Activated naive CD4-positive, alpha-beta T cell treated with anti-CD3 and anti-CD28 coated beads for 36 hours (primary cell): ENCODE measurements at regions of chr2 and their contacts with region 1.

Region 1: GRCh38 chr2:11129598-11130449 is 25.4 kb upstream of the SLC66A3 start:
- DNase-seq: peak; percentile 89
- H3K4me3 Mint-ChIP-seq: peak overlapping the region; percentile 57
- H3K27ac Mint-ChIP-seq: peak overlapping the region; percentile 71
- H3K4me1 Mint-ChIP-seq: peaks cover 21% of the 10 kb centered on the region
- H3K27me3 Mint-ChIP-seq: no peaks in the 10 kb centered on the region

Region 2: GRCh38 chr2:11142345-11142744 is 12.5 kb after region 1 on chr2:
- CTCF ChIA-PET with region 1: interaction called, 27 read pairs
- intact Hi-C with region 1: no loop called
- DNase-seq: no peak
- H3K4me3 Mint-ChIP-seq: no peak overlapping the region
- H3K27ac Mint-ChIP-seq: no peak overlapping the region
- H3K4me1 Mint-ChIP-seq: no peaks in the 10 kb centered on the region
- H3K27me3 Mint-ChIP-seq: no peaks in the 10 kb centered on the region

Region 3: GRCh38 chr2:11200651-11201050 is 70.8 kb after region 1 on chr2:
- CTCF ChIA-PET with region 1: interaction called, 16 read pairs
- intact Hi-C with region 1: no loop called
- DNase-seq: no peak
- H3K4me3 Mint-ChIP-seq: no peak overlapping the region
- H3K27ac Mint-ChIP-seq: no peak overlapping the region
- H3K4me1 Mint-ChIP-seq: peaks cover 9% of the 10 kb centered on the region
- H3K27me3 Mint-ChIP-seq: no peaks in the 10 kb centered on the region

Region 4: DNA sequence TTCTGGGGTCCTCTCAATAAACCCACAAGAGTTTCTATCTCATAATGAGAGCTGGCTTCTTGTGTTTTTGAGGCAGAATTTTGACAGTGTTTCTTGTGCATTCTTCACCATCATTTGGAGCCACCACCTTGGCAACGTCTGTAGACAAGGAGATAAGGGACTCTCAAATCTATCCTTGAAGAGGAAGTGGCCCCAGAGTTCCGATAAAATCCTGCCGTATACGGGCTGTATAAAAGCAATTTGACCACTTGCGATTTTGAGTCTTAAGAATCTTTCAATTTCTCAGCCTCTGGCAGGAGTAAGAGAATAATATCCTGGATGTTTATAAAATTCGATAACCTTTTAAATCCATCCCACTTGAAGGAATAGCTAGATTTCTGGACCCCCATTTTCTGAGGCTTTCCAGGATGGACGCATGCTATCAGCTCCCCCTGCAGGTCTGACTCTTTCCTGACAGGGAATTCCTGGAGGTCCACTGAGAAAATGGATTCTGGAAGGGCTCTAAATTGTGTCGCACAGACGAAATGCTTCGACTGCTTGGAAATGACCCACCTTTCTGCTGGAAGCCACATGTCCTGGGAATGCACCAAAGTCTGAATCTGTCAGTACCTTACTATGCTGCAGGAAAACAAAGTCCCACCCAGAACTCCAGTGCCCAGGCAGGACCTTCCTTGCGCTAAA is 282.1 kb after region 1 on chr2:
- CTCF ChIA-PET with region 1: interaction called, 8 read pairs
- intact Hi-C with region 1: loop called (anchors 1 kb)
- DNase-seq: peak; percentile 30
- H3K4me3 Mint-ChIP-seq: no peak overlapping the region
- H3K27ac Mint-ChIP-seq: no peak overlapping the region
- H3K4me1 Mint-ChIP-seq: no peaks in the 10 kb centered on the region
- H3K27me3 Mint-ChIP-seq: peaks cover 10% of the 10 kb centered on the region

Region 5: DNA sequence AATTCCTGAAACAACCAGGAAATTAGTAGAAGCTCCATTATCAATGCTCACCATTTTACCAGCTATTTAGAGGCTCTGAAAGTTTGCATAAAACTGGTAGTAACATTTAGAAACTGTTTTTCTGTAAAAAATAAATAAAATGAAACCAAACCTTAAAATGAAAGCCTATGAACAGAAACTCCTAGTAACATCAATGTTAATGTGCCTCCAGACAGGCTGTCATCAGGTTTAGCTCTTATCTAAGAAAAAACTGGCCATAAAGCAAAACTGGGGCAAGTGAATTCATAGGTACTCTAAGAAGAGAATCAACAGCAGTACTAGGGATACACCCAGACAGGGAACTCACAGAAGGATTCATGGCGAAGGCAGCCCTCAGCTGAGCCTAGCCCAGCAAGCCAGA is 328.1 kb after region 1 on chr2:
- CTCF ChIA-PET with region 1: interaction called, 19 read pairs
- intact Hi-C with region 1: no loop called
- DNase-seq: no peak
- H3K4me3 Mint-ChIP-seq: no peak overlapping the region
- H3K27ac Mint-ChIP-seq: no peak overlapping the region
- H3K4me1 Mint-ChIP-seq: peaks cover 41% of the 10 kb centered on the region
- H3K27me3 Mint-ChIP-seq: no peaks in the 10 kb centered on the region

Region 6: DNA sequence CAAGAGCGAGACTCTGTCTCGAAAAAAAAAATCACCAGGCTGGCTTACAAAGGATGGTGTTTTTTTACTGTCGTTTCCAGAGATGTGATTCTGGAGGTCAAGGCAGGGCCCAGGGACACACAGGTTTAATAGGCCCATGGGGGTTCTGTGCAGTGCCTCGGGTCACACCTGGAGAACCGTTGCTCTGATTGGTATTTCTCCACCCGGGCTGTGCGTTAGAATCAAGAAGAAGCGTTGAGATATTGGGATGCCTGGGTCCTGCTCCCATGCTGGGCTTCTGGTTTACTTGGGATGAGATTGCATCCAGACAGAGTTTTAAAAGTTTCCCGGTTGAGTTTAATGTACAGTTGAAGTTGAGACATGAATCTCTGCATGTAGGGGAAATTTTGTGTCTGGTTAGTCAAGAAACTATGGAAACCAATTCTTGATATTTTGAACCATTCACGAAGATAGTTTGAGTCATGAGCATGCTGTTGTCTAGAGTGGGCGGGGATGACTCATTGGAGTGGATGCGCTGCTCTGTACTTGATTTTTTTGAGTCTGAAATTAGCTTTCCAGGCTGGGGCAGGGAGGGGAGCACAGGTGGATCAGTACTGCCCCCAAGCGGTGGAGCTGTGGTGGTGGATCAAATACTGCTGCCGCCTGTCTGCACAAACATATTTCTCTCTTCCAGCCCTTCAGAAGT is 454.2 kb after region 1 on chr2:
- CTCF ChIA-PET with region 1: interaction called, 93 read pairs
- intact Hi-C with region 1: loop called (anchors 1 kb)
- DNase-seq: peak; percentile 96
- H3K4me3 Mint-ChIP-seq: no peak overlapping the region
- H3K27ac Mint-ChIP-seq: peak overlapping the region; percentile 6
- H3K4me1 Mint-ChIP-seq: peaks cover 19% of the 10 kb centered on the region
- H3K27me3 Mint-ChIP-seq: peaks cover 6% of the 10 kb centered on the region

Region 7: DNA sequence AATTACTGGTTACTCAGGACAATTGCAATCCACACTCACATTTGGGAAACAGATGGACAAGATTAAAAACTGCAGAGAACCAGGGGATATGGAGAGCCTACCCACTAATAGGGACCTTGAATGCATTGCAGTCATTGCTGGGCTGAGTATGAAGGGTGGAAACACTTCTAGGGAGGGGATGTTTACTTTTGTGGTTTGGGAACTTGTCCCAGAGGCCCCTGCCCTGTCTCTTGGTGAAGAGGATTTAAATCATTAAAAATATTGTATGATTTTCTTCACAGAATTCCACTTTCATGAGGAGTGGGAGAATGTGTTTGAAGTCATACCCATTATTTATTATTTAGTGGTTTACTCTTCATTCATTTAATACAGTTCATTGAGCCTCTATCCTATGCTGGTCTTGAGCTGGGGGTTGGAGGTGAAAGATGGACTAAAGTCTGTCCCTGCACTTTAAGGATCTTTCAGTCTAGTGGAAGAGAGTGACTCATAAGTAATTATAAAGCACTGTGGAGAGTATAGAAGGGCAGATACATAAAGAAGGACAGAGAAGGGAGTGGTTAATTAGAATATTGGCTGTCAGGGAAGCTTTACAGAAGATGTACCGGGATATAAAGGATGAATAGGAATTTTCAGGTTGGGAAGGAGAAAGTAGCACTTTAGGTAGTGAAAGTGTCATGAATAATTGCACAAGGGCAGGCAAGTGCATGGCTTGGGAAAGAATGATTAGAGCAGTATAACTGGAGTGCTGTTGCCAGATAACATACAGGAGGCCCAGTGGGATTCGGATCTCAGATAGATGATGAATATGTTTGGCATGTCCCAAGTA is 930.0 kb after region 1 on chr2:
- CTCF ChIA-PET with region 1: no interaction called
- intact Hi-C with region 1: no loop called
- DNase-seq: no peak
- H3K4me3 Mint-ChIP-seq: no peak overlapping the region
- H3K27ac Mint-ChIP-seq: no peak overlapping the region
- H3K4me1 Mint-ChIP-seq: peaks cover 12% of the 10 kb centered on the region
- H3K27me3 Mint-ChIP-seq: no peaks in the 10 kb centered on the region